ENCODE measurements at regions of chr2 and their contacts with region 1.

Region 1: DNA sequence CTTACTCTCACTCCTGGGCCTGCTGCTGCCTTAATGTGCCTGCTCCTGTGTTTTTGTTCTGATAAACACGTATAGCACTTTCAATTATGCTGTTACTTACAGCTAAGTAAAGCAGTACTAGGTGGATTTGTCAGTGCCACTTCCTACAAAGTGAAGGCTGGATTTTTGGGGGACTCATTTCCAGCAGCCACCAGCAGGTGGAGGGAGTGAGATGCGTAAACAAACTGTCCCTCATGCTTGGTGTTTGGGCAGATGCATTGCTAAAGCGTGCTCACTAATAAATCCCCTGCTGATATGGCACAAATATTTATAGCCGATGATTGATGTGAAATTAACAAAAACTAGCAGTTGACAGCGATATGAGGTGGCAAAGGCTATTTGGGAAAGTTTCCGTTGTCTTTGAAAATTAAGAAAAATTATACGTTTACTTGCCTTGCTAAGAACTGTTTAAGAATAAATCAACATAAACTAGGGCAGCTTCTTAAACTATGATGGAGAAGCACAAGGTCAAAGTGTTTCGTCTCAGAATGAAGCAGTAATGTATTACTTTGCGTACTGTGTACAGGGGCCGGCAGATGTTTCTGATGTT is 101.7 kb downstream of the AGAP1 start:
- DNase-seq: peak; percentile 85
- H3K4me3 ChIP-seq: no peak overlapping the region
- H3K27ac ChIP-seq: no peak overlapping the region
- H3K4me1 ChIP-seq: peaks cover 3% of the 10 kb centered on the region
- H3K27me3 ChIP-seq: no peaks in the 10 kb centered on the region
- CTCF ChIP-seq: peak; percentile 83
- POLR2A ChIP-seq: no peak

Region 2: DNA sequence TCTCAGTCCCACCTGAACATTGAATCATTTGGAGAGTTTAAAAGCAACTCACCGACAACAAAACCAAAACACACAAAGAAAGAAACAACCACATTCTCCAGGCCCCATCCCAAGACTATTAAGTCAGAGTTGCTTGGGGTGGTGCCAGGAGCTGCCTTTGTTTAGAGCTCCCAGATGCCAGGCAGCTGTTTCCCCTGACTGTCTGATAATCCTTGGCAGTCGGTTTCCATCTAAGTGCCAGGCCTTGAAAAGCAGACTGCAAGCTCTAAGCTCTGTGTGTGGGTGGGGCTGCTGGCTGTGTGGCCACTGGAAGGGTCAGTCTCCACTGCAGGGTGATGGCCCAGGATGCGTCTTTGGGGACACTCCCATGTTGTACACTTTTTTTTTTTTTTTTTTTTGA is 357.0 kb before region 1 on chr2:
- CTCF ChIA-PET with region 1: no interaction called
- POLR2A ChIA-PET with region 1: no interaction called
- dilution Hi-C with region 1: no loop called
- intact Hi-C with region 1: loop called (anchors 10 kb)
- DNase-seq: peak; percentile 86
- H3K4me3 ChIP-seq: no peak overlapping the region
- H3K27ac ChIP-seq: peak overlapping the region; percentile 19
- H3K4me1 ChIP-seq: peaks cover 12% of the 10 kb centered on the region
- H3K27me3 ChIP-seq: no peaks in the 10 kb centered on the region
- CTCF ChIP-seq: no peak
- POLR2A ChIP-seq: no peak

Region 3: DNA sequence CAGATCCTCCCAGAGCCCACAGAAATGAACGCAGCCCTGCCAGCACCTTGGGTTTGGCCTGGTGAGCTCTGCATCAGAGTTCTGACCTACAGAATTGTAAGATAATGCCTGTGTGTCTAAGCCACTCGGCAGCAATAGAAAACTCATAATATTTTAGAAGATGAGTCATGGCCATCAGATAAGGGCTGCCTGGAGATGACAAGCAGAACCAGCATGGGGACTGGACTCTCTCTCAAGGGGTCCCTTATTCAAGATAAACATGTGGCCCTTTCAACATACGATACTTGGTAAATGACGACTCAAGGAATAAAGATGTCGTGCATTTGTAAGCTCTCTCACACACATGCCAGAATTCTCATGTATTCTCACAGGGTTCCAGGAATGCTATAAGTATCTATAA is 110.2 kb before region 1 on chr2:
- CTCF ChIA-PET with region 1: interaction called, 11 read pairs
- POLR2A ChIA-PET with region 1: no interaction called
- dilution Hi-C with region 1: no loop called
- intact Hi-C with region 1: no loop called
- DNase-seq: no peak
- H3K4me3 ChIP-seq: no peak overlapping the region
- H3K27ac ChIP-seq: no peak overlapping the region
- H3K4me1 ChIP-seq: no peaks in the 10 kb centered on the region
- H3K27me3 ChIP-seq: peaks cover 2 to 7% of the 10 kb centered on the region in 2 experiments
- CTCF ChIP-seq: no peak
- POLR2A ChIP-seq: no peak

Region 4: DNA sequence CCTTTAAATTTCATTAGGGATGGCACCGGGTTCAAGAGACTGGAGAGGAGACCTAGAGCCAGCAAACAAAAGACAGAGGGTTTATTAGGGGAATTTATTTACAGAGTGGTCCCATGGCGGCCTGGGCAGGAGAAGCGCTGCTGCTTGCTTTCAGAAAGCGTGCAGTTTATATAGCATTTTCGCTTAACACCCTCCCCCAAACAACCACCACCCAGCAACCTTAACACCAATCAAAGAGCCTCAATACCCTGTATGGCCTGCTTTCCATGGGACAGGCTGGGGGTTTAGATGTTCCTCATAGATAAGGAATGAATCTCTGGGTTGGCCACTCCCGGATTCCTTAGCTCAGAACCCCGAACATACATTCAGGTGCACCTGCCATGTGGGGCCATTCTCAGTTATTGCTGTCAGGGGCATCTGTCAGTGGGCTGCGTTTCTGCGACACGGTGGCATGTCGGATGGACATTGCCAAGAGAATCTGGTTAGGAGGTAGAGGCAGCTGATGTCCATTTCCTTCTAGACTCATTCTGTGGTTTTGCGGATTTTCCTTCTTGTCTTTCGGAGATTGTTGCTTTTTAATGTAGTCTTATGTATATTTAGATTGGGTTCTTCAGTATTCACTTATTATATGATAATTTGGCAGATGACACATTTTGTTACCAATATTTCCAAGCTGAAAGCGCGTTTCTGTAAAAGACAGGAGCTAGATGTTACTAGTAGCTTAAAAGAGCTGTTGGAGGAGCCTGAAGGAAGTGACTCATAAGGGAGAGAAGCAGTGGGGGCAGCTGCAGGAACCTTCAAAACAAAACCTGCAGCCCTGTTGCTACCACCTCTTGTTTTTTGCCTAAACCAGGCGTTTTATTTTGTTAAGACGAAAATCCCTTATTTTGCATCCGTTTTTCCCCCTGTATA is 94.5 kb before region 1 on chr2:
- CTCF ChIA-PET with region 1: interaction called, 14 read pairs
- POLR2A ChIA-PET with region 1: no interaction called
- dilution Hi-C with region 1: no loop called
- intact Hi-C with region 1: no loop called
- DNase-seq: peak; percentile 66
- H3K4me3 ChIP-seq: peak overlapping the region in 1 of 3 experiments; percentile 3
- H3K27ac ChIP-seq: peak overlapping the region; percentile 28
- H3K4me1 ChIP-seq: peaks cover 17% of the 10 kb centered on the region
- H3K27me3 ChIP-seq: no peaks in the 10 kb centered on the region
- CTCF ChIP-seq: no peak
- POLR2A ChIP-seq: no peak

Region 5: GRCh38 chr2:235582081-235582686 is 13.3 kb before region 1 on chr2:
- CTCF ChIA-PET with region 1: interaction called, 11 read pairs
- POLR2A ChIA-PET with region 1: no interaction called
- dilution Hi-C with region 1: no loop called
- intact Hi-C with region 1: no loop called
- DNase-seq: no peak
- H3K4me3 ChIP-seq: no peak overlapping the region
- H3K27ac ChIP-seq: no peak overlapping the region
- H3K4me1 ChIP-seq: no peaks in the 10 kb centered on the region
- H3K27me3 ChIP-seq: no peaks in the 10 kb centered on the region
- CTCF ChIP-seq: no peak
- POLR2A ChIP-seq: no peak

Region 6: DNA sequence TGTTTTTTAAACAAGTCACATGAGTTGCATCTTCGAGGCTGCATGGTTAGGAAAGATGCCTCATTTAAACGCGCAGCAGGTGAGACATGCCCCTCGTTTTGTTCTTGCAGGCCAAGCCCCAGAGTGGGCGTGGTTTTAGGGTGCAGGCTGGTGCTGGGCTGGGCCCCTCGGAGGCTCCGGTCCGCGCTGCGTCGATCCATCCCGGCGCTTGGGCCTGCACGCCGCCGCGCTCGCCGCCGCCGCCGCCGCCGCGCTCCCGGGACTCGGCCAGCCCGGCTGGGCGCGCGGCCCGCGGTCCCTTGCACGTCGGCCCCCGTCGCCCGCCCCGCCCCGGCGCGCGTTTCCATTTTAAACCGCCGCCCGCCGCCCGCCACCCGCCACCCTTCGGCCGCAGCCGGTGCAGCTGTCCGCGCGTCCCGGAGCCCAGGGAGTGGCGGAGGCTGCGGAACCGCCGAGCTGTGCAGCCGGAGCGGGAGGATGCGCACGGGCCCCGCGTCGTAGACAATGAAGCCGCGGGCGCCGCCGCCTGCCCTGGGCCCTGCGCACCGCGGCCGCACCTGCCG is 73.8 kb after region 1 on chr2:
- CTCF ChIA-PET with region 1: interaction called, 22 read pairs
- POLR2A ChIA-PET with region 1: no interaction called
- dilution Hi-C with region 1: no loop called
- intact Hi-C with region 1: loop called (anchors 1 kb)
- DNase-seq: peak; percentile 35
- H3K4me3 ChIP-seq: peak overlapping the region in 1 of 3 experiments; percentile 48
- H3K27ac ChIP-seq: no peak overlapping the region
- H3K4me1 ChIP-seq: peaks cover 2% of the 10 kb centered on the region
- H3K27me3 ChIP-seq: peaks cover 22 to 27% of the 10 kb centered on the region in 2 experiments
- CTCF ChIP-seq: no peak
- POLR2A ChIP-seq: no peak

Region 7: DNA sequence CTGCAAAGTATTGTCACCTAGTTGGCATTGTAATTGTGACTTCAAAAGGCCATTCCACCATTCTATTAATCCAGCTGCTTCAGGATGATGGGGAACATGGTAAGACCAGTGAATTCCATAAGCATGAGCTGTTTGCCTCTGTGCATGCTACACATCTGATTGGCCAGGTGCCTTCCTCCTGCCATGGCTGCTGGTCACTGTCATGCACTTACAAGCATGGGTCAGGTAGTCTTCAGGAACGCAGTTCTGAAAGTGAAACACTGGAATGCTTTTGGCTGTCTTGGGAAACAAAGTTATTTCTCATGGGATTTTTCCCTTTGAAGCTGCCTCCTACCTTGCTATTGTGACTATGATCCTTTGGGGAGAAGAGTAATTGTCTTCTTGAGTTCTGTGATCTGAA is 305.1 kb after region 1 on chr2:
- CTCF ChIA-PET with region 1: no interaction called
- POLR2A ChIA-PET with region 1: no interaction called
- dilution Hi-C with region 1: no loop called
- intact Hi-C with region 1: no loop called
- DNase-seq: peak; percentile 37
- H3K4me3 ChIP-seq: no peak overlapping the region
- H3K27ac ChIP-seq: peak overlapping the region; percentile 43
- H3K4me1 ChIP-seq: peaks cover 23% of the 10 kb centered on the region
- H3K27me3 ChIP-seq: no peaks in the 10 kb centered on the region
- CTCF ChIP-seq: no peak
- POLR2A ChIP-seq: no peak